Right cardiac atrium (tissue), 5 donors: ENCODE measurements at regions of chr7 and their contacts with region 1.

Region 1: DNA sequence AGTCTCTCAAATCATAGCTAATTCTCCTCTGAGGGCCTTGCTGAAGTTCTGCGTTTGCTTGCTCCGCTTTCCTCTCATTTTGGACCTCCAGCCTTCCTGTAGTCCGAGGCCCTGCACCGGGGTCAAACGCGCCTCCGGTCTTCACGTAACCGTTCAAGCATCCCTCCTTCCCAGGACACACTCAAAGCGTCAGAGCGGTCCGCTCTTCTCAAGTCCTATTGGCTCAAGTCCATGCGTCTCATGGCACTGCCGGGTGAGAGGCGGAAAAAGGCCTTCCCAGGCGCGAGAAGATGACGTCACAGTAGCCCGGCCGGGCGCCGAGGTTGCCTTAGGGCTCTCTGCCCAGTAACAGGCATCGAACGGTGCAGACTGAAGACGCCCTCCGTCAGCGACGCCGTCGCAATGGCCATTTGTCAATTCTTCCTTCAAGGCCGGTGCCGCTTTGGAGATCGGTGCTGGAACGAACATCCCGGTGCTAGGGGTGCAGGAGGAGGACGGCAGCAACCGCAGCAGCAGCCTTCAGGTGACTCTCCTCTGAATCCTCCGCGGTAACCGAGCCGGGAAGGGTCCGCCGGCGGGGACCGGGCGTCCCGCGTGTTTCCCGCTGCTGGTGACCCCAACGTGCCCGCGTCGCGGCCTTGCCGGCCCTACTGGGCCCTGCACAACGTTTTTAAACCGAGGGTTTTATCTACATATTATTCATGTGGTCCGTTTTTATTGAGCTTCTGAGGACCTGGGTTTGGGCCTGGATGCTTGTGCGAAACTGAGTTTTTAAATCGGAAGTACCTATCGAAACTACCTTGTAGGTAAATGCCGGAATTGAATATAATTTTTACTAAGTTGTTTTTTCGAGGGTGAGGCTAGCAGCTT is at the start of gene NUP42:
- DNase-seq: peak; percentile 95 to 97 (median 97)
- ATAC-seq: peak; percentile 97 to 98
- H3K4me3 ChIP-seq: peak within 1 kb of the TSS; percentile 87
- H3K27ac ChIP-seq: peak within 1 kb of the TSS; percentile 99
- H3K4me1 ChIP-seq: peaks cover 2% of the 10 kb centered on the region
- H3K27me3 ChIP-seq: no peaks in the 10 kb centered on the region
- total RNA-seq, gene NUP42: 19.4 to 24.7 (median 21.1) TPM

Region 2: DNA sequence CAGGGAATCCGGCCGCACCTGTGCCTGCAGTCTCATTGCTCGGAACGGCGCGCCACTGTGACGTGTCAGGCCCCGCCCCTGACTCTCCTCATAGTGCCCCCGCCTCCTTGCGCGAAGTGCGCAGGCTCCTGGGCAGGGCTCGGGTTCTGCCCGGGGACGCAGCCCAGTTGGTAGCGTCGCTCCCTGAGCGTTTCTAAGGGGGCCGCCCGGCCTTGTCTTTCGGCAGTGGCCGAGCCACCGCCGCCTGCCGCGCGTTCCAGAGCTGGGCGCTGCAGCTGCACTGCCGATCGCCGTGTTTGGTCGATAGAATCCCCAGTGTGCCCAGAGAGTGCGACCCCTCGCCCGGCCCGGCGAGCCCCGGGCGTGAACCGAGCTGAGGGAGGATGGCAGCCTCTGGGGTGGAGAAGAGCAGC is 76.3 kb before region 1 on chr7 and contains the start of gene KLHL7:
- intact Hi-C with region 1: loop called (anchors 5 to 10 kb)
- DNase-seq: peak; percentile 97 to 99 (median 99)
- ATAC-seq: peak; percentile 99 to 100
- H3K4me3 ChIP-seq: peak within 1 kb of the TSS; percentile 90
- H3K27ac ChIP-seq: peak within 1 kb of the TSS; percentile 95
- H3K4me1 ChIP-seq: peaks cover 5% of the 10 kb centered on the region
- H3K27me3 ChIP-seq: no peaks in the 10 kb centered on the region
- total RNA-seq, gene KLHL7: 68.8 to 106 (median 83.2) TPM

Region 3: DNA sequence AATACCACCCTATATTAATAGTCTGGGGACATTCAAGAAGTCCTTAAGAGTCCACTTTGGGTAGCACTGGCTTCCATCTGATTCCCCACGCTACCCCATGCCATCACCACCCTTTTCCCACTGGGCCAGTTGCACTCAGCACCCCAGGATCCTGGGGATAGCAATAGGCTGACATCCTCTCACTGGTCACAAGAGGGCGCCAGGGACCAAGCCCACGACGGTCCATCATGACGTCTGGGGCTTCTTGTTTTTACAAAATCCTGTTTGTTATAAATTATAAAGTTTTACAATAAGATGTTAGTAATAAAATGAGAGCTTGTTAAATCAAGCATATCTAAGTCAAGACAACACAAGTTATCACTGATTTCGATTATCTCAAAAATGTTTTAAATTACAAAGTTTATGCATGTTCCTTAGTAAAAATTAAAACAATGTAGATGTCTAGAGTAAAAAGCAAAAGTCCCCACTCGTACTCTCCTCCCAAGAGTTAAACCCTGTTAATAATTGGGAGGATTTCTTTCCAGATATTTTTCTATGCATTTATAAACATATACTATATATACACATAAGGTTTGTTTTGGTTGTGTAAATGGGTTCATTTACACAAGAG is 80.0 kb after region 1 on chr7:
- intact Hi-C with region 1: loop called in 2 of 4 experiments (anchors 5 to 10 kb)
- DNase-seq: peak; percentile 64 to 75 (median 75)
- ATAC-seq: peak; percentile 76 to 85
- H3K4me3 ChIP-seq: no peak overlapping the region
- H3K27ac ChIP-seq: no peak overlapping the region
- H3K4me1 ChIP-seq: no peaks in the 10 kb centered on the region
- H3K27me3 ChIP-seq: no peaks in the 10 kb centered on the region

Region 4: GRCh38 chr7:23721456-23721855 is 539.5 kb after region 1 on chr7:
- intact Hi-C with region 1: no loop called
- DNase-seq: no peak
- ATAC-seq: no peak
- H3K4me3 ChIP-seq: no peak overlapping the region
- H3K27ac ChIP-seq: no peak overlapping the region
- H3K4me1 ChIP-seq: no peaks in the 10 kb centered on the region
- H3K27me3 ChIP-seq: no peaks in the 10 kb centered on the region